ENCODE measurements at regions of chr16 and their contacts with region 1.

Region 1: GRCh38 chr16:35585411-35585810 is 2126.0 kb downstream of the TP53TG3F start:
- DNase-seq: no peak
- ATAC-seq: no peak
- H3K4me3 ChIP-seq: no peak overlapping the region
- H3K27ac ChIP-seq: no peak overlapping the region
- H3K4me1 ChIP-seq: no peaks in the 10 kb centered on the region
- H3K27me3 ChIP-seq: no peaks in the 10 kb centered on the region
- CTCF ChIP-seq: no peak
- POLR2A ChIP-seq: no peak
- RAD21 ChIP-seq: no peak

Region 2: DNA sequence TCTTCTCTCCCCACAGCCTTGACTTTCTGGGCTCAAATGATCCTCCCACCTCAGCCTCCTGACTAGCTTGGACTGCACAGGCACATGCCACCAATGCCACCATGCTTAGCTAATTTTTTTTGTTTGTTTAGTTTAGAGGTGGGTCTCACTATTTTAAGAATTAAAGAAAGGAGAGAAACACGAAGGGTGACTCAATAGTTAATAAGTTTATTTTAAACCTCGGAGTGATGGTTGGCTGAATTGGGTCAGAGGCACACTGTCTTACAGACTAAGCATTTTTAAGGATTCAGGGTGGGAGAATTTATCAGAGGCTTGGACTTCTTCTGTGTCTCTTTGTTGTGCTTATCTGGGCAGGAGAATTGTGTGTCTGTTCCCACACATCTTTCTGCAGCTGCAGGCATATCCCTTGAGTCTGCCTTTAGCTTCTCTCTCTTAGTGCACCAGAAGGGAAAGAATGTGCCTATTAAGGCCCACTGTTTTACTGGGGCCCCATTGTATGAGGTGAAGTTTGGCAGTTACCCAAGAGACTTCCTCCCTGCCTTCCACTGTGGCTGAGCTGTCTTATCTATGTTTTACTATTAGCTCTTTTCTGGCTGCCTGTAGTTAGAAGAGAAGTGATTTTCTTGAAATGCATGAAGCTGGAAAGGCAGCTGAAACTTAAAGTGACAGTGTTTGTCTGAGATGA is 46.0 kb after region 1 on chr16:
- CTCF ChIA-PET with region 1: no interaction called
- POLR2A ChIA-PET with region 1: no interaction called
- RAD21 ChIA-PET with region 1: no interaction called
- intact Hi-C with region 1: loop called (anchors 10 kb)
- DNase-seq: no peak
- ATAC-seq: no peak
- H3K4me3 ChIP-seq: no peak overlapping the region
- H3K27ac ChIP-seq: no peak overlapping the region
- H3K4me1 ChIP-seq: no peaks in the 10 kb centered on the region
- H3K27me3 ChIP-seq: no peaks in the 10 kb centered on the region
- CTCF ChIP-seq: no peak
- POLR2A ChIP-seq: no peak
- RAD21 ChIP-seq: no peak

Region 3: DNA sequence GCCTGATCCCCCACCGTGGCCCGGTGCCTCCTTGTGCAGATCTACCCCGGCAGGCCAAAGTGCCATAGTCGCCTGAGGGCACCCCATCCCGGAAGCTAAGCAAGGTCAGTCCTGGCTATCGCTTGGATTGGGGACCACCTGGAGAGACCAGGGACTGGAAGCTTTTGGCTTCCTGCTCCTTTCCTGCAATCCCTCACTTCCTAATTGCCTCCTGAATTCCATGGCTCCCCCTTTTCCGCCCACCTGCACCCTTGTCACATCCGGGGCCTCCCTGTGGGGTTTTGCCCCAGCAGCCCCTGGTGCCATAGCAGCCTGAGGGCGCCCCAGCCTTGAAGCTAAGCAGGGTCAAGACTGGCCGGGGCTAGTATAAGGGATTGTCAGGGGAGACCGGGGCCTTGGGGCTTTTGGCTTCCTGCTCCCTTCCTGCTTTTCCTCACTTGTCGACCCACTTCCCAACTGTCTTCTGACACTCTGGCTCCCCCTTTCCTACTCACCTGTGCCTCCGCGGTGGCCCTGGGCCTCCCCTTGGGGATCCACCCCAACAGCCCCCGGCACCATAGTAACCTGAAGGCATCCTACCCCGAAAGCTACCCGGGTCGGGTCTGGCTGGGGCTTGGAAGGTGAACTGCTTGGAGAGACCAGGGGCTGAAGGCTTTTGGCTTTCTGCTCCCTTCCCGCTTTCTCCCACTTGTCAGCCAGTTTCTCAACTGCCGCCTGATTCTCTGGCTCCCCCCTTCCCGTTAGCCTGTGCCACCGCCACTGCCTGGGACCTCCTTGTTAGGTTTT is 167.6 kb after region 1 on chr16:
- CTCF ChIA-PET with region 1: no interaction called
- POLR2A ChIA-PET with region 1: no interaction called
- RAD21 ChIA-PET with region 1: no interaction called
- intact Hi-C with region 1: no loop called
- DNase-seq: no peak
- ATAC-seq: no peak
- H3K4me3 ChIP-seq: no peak overlapping the region
- H3K27ac ChIP-seq: no peak overlapping the region
- H3K4me1 ChIP-seq: no peaks in the 10 kb centered on the region
- H3K27me3 ChIP-seq: no peaks in the 10 kb centered on the region
- CTCF ChIP-seq: no peak
- POLR2A ChIP-seq: no peak
- RAD21 ChIP-seq: no peak

Measured in HCT116 (cell line).